Heart right ventricle (tissue), 16 donors: ENCODE measurements at regions of chr13 and their contacts with region 1.

Region 1: DNA sequence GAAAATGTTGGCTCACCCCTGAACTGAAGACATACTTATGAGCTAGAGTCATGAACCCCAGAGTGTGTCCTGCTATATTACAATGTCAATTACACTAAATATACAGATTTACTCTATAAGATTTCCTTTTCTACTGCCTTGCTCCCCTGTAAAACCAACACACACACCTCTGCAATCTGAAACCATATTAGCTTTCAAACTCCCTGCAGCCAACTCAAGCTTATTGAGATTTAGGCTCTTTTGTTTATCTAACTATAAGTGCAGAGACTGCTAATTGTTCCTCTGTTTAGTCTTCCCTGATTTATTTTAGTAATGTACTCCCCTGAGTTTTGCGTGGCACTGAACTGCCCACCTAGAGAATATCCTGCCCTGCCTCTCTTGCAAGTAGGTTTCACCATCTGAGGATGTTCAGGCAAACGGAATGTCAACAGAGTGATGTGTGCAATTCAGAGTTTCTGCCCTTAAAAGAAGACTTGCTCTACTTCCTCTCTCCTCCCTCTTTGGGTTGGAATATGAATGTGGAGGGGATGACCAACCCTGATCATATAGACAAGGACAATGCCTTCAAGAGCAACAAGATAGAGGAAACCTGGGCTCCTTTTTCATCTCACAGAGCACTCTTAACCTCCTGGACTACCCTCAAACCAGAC is 22.3 kb downstream of the FAM216B start:
- DNase-seq: no peak
- ATAC-seq: no peak
- H3K4me3 ChIP-seq: no peak overlapping the region
- H3K27ac ChIP-seq: no peak overlapping the region
- H3K4me1 ChIP-seq: no peaks in the 10 kb centered on the region
- H3K27me3 ChIP-seq: no peaks in the 10 kb centered on the region
- CTCF ChIP-seq: no peak

Region 2: GRCh38 chr13:42486711-42487198 is 316.9 kb before region 1 on chr13:
- intact Hi-C with region 1: no loop called
- DNase-seq: no peak
- ATAC-seq: no peak
- H3K4me3 ChIP-seq: no peak overlapping the region
- H3K27ac ChIP-seq: no peak overlapping the region
- H3K4me1 ChIP-seq: peaks cover 0 to 8% (median 0%) of the 10 kb centered on the region in 9 donors
- H3K27me3 ChIP-seq: peaks cover 0 to 4% (median 0%) of the 10 kb centered on the region in 7 donors
- CTCF ChIP-seq: no peak

Region 3: GRCh38 chr13:42681326-42682100 is 122.2 kb before region 1 on chr13:
- intact Hi-C with region 1: loop called in 1 of 10 experiments (anchors 10 kb)
- DNase-seq: no peak
- ATAC-seq: no peak
- H3K4me3 ChIP-seq: no peak overlapping the region
- H3K27ac ChIP-seq: no peak overlapping the region
- H3K4me1 ChIP-seq: peaks cover 0 to 14% (median 0%) of the 10 kb centered on the region in 9 donors
- H3K27me3 ChIP-seq: no peaks in the 10 kb centered on the region
- CTCF ChIP-seq: no peak